ENCODE measurements at regions of chr7 and their contacts with region 1.

Region 1: DNA sequence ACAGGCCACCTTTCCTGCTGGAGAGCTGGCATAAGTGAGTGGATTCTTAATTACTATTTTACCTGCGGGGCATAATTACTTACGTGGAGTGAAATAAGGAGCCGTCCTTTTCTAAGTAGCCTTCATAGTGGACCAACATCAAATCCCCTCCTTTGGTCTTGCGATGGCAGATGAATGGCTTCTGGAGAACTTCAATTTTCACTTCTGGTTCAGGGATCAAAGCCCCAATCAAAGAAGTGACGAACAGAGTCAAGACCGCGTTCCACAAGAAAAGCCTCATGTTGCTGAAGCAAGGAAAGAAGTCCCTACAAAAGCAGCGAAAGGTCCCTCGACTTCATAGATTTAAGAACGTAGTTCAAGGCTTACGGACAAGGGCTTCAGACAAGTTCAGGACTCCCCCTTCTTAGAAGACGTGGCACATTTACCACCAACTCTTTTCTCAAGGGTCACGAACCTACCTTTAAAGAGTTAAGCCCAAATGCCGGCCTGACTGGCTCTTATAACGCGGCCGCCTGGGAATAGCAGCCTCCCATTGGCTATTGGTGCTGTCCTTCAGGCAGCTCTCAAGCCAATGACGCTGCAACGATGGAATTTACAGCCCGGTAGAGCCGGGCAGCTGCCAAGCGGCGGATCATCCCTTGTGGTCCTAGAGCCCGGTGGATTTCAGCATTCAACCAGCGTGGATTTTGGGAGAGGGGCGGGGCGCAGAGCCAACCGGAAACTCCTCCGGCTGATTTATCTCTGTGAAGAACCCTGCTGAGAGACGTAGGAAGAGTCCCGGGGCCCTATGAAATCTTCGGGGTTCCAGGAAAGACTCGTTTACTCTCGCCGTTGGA is at the start of gene FKBP14:
- DNase-seq: peak; percentile 97 to 98
- ATAC-seq: peak; percentile 92 to 97 (median 93)
- H3K4me3 ChIP-seq: peak within 1 kb of the TSS; percentile 94
- H3K27ac ChIP-seq: peak within 1 kb of the TSS; percentile 94
- H3K4me1 ChIP-seq: peaks cover 26% of the 10 kb centered on the region
- H3K27me3 ChIP-seq: no peaks in the 10 kb centered on the region
- CTCF ChIP-seq: no peak
- total RNA-seq, gene FKBP14: 4.1 to 5.0 (median 4.5) TPM

Region 2: DNA sequence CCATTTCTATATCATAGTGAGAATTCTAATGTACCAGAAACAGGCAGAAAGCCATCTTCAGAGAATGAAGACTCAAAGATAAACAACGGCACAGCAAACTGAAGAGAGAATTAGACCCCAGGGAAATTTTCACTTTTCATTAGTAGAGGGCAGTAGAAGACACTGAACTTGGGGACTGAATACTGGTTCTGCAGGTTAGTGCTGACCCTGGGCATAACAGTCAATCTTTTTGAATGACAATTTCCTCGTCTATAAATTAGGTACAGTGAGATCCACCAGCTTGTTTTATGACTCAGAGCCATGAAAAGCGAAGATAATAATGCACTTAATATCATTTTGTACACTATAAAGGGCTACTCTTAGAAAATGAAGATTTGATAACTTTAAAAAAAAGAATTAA is 13.7 kb before region 1 on chr7:
- intact Hi-C with region 1: no loop called
- DNase-seq: no peak
- ATAC-seq: no peak
- H3K4me3 ChIP-seq: no peak overlapping the region
- H3K27ac ChIP-seq: no peak overlapping the region
- H3K4me1 ChIP-seq: no peaks in the 10 kb centered on the region
- H3K27me3 ChIP-seq: peaks cover 0 to 3% (median 0%) of the 10 kb centered on the region in 3 donors
- CTCF ChIP-seq: no peak

Region 3: DNA sequence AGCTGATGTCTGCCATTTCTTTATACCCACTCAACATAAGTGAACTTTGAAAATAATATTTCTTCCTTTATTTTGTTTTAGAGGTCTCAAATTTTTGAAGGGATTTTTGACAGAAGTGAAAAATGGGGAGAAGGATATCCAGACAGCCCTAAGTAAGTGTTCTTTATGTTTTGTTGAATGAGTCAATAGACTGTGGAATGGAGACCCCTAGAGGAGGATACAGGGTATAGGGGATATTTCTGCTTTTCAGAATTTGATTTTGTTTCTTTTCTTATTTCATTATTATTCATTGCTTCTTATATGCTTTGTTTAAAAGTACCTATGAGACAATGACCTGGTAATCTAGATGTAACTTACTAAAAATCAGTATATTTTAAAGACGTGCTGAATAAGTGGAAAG is 36.1 kb after region 1 on chr7:
- intact Hi-C with region 1: loop called in 1 of 2 experiments (anchors 5 kb)
- DNase-seq: no peak
- ATAC-seq: peak in 2 of 4 donors; percentile 65 to 84
- H3K4me3 ChIP-seq: no peak overlapping the region
- H3K27ac ChIP-seq: no peak overlapping the region
- H3K4me1 ChIP-seq: no peaks in the 10 kb centered on the region
- H3K27me3 ChIP-seq: no peaks in the 10 kb centered on the region
- CTCF ChIP-seq: peak; percentile 56

Region 4: GRCh38 chr7:30072735-30073134 is 46.3 kb after region 1 on chr7:
- intact Hi-C with region 1: no loop called
- DNase-seq: no peak
- ATAC-seq: no peak
- H3K4me3 ChIP-seq: no peak overlapping the region
- H3K27ac ChIP-seq: no peak overlapping the region
- H3K4me1 ChIP-seq: peaks cover 5% of the 10 kb centered on the region
- H3K27me3 ChIP-seq: no peaks in the 10 kb centered on the region
- CTCF ChIP-seq: no peak

Region 5: GRCh38 chr7:30087371-30087770 is 60.9 kb after region 1 on chr7:
- intact Hi-C with region 1: no loop called
- DNase-seq: no peak
- ATAC-seq: no peak
- H3K4me3 ChIP-seq: no peak overlapping the region
- H3K27ac ChIP-seq: no peak overlapping the region
- H3K4me1 ChIP-seq: no peaks in the 10 kb centered on the region
- H3K27me3 ChIP-seq: no peaks in the 10 kb centered on the region
- CTCF ChIP-seq: no peak